Gastrocnemius medialis (tissue), 4 donors: ENCODE measurements at regions of chr2 and their contacts with region 1.

Region 1: DNA sequence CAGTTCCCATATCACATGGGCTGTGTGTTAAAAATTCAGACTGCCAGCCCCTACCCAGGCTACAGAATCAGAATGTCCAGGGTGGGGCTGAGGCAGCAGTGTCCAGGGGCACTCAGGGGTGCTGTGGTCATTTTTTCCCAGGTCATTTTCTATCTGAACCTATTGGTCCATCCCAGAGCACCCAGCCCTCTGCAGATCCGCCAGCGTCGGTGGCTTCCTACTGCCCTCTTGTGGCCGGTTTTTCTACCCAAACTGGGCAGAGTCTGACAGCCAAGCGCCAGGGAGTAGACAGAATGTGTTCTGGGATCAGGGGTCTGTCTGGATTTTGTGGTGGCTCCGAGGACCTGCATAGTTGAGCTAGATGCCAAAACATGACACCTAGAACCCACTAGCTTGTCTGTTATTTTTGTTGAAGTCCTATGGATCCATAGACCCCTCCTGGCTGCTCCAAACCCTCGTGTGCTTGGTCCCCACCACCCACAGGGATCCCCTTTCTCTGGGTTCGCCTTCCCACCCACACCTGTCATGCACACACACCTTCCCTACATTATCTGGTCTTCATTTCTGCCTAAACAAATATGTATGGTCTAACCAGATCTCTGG is 34.1 kb upstream of the RMDN2 start:
- DNase-seq: peak; percentile 38 to 46
- ATAC-seq: peak; percentile 58 to 92
- H3K4me3 ChIP-seq: no peak overlapping the region
- H3K27ac ChIP-seq: no peak overlapping the region
- H3K4me1 ChIP-seq: no peaks in the 10 kb centered on the region
- H3K27me3 ChIP-seq: no peaks in the 10 kb centered on the region
- CTCF ChIP-seq: peak; percentile 25 to 82 (median 58)
- POLR2A ChIP-seq: no peak

Region 2: GRCh38 chr2:37156857-37157714 is 733.9 kb before region 1 on chr2 and contains the start of gene EIF2AK2:
- in situ Hi-C with region 1: loop called in 2 of 4 experiments (anchors 25 kb)
- intact Hi-C with region 1: no loop called
- DNase-seq: peak; percentile 59 to 66
- ATAC-seq: peak; percentile 79 to 85
- H3K4me3 ChIP-seq: peak within 1 kb of the TSS; percentile 68 to 85 (median 76)
- H3K27ac ChIP-seq: peak within 1 kb of the TSS; percentile 66 to 84 (median 78)
- H3K4me1 ChIP-seq: peaks cover 10% of the 10 kb centered on the region in 2 donors
- H3K27me3 ChIP-seq: no peaks in the 10 kb centered on the region
- CTCF ChIP-seq: no peak
- POLR2A ChIP-seq: peak in 1 of 2 donors; percentile 29
- total RNA-seq, gene EIF2AK2: 3.9 to 11.0 (median 6.9) TPM

Region 3: GRCh38 chr2:37326285-37326684 is 564.7 kb before region 1 on chr2:
- in situ Hi-C with region 1: no loop called
- intact Hi-C with region 1: no loop called
- DNase-seq: peak; percentile 27 to 29
- ATAC-seq: peak in 1 of 2 donors; percentile 29
- H3K4me3 ChIP-seq: peak overlapping the region; percentile 71 to 88 (median 80)
- H3K27ac ChIP-seq: peak overlapping the region; percentile 79 to 93 (median 90)
- H3K4me1 ChIP-seq: peaks cover 17 to 27% of the 10 kb centered on the region in 2 donors
- H3K27me3 ChIP-seq: no peaks in the 10 kb centered on the region
- CTCF ChIP-seq: no peak
- POLR2A ChIP-seq: peak in 1 of 2 donors; percentile 13